Activated CD4-positive, alpha-beta T cell treated with anti-CD3 and anti-CD28 coated beads for 36 hours (primary cell): ENCODE measurements at regions of chr14 and their contacts with region 1.

Region 1: DNA sequence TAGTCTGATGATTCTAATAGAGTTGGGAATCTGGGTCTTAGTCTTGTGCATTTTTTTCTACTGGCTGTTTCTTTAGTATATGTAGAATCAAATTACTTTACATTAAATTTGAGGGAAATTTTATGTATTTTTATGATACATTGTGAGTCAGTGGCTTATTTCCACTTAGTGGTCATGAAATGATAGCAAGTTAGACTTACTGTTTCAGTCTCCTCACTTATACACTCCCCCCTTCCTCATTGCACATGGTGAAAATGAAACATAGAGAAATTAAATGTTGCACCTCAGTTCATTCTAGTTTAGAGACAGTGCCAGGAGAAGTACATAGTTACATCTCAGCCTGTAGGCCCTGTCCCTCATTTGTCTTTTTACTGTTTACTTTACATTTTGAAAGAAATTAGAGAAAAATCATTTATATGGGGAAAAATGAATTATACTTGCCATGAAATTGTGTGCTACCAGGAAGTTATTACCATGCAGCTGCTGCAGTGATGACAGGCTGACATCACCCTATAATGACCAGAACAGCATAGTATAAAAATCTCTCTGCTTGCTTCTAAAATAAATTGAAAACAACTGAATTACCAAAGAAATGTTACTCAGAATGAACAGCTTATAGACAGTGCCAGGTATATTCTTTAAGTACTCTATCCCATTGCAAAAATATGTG is 113.2 kb downstream of the TRMT5 start:
- DNase-seq: no peak
- ATAC-seq: peak; percentile 95
- H3K4me3 Mint-ChIP-seq: no peak overlapping the region
- H3K27ac Mint-ChIP-seq: no peak overlapping the region
- H3K4me1 Mint-ChIP-seq: peaks cover 11% of the 10 kb centered on the region
- H3K27me3 Mint-ChIP-seq: no peaks in the 10 kb centered on the region

Region 2: GRCh38 chr14:60965402-60965801 is 97.8 kb after region 1 on chr14:
- CTCF ChIA-PET with region 1: no interaction called
- POLR2A ChIA-PET with region 1: no interaction called
- intact Hi-C with region 1: loop called in 1 of 2 experiments (anchors 5 kb)
- DNase-seq: peak; percentile 12
- ATAC-seq: peak; percentile 92
- H3K4me3 Mint-ChIP-seq: no peak overlapping the region
- H3K27ac Mint-ChIP-seq: peak overlapping the region; percentile 26
- H3K4me1 Mint-ChIP-seq: peaks cover 9% of the 10 kb centered on the region
- H3K27me3 Mint-ChIP-seq: no peaks in the 10 kb centered on the region